Heart left ventricle (tissue), 16 donors: ENCODE measurements at regions of chr6 and their contacts with region 1.

Region 1: GRCh38 chr6:128520436-128521281 is at the start of gene PTPRK:
- DNase-seq: peak; percentile 94 to 96 (median 95)
- ATAC-seq: peak; percentile 87 to 96 (median 94)
- H3K4me3 ChIP-seq: peak within 1 kb of the TSS; percentile 60 to 91 (median 87)
- H3K27ac ChIP-seq: peak within 1 kb of the TSS; percentile 87 to 98 (median 94)
- H3K4me1 ChIP-seq: peaks cover 0 to 33% (median 22%) of the 10 kb centered on the region in 12 donors
- H3K27me3 ChIP-seq: peaks cover 0 to 48% (median 0%) of the 10 kb centered on the region in 9 donors
- CTCF ChIP-seq: peak in 11 of 12 donors; percentile 46 to 92 (median 81)
- POLR2A ChIP-seq: peak; percentile 66 to 98
- total RNA-seq, gene PTPRK: 27.8 to 50.8 (median 40.0) TPM

Region 2: GRCh38 chr6:127855542-127856159 is 665.0 kb before region 1 on chr6:
- intact Hi-C with region 1: loop called in 1 of 10 experiments (anchors 10 kb)
- DNase-seq: no peak
- ATAC-seq: no peak
- H3K4me3 ChIP-seq: no peak overlapping the region
- H3K27ac ChIP-seq: no peak overlapping the region
- H3K4me1 ChIP-seq: no peaks in the 10 kb centered on the region
- H3K27me3 ChIP-seq: no peaks in the 10 kb centered on the region
- CTCF ChIP-seq: peak in 10 of 12 donors; percentile 30 to 60 (median 42)
- POLR2A ChIP-seq: no peak

Region 3: GRCh38 chr6:128240024-128240428 is 280.6 kb before region 1 on chr6:
- intact Hi-C with region 1: loop called in 3 of 10 experiments (anchors 10 kb)
- DNase-seq: no peak
- ATAC-seq: no peak
- H3K4me3 ChIP-seq: no peak overlapping the region
- H3K27ac ChIP-seq: peak overlapping the region in 4 of 12 donors; percentile 1 to 37 (median 12)
- H3K4me1 ChIP-seq: peaks cover 0 to 38% (median 11%) of the 10 kb centered on the region in 12 donors
- H3K27me3 ChIP-seq: no peaks in the 10 kb centered on the region
- CTCF ChIP-seq: no peak
- POLR2A ChIP-seq: no peak

Region 4: DNA sequence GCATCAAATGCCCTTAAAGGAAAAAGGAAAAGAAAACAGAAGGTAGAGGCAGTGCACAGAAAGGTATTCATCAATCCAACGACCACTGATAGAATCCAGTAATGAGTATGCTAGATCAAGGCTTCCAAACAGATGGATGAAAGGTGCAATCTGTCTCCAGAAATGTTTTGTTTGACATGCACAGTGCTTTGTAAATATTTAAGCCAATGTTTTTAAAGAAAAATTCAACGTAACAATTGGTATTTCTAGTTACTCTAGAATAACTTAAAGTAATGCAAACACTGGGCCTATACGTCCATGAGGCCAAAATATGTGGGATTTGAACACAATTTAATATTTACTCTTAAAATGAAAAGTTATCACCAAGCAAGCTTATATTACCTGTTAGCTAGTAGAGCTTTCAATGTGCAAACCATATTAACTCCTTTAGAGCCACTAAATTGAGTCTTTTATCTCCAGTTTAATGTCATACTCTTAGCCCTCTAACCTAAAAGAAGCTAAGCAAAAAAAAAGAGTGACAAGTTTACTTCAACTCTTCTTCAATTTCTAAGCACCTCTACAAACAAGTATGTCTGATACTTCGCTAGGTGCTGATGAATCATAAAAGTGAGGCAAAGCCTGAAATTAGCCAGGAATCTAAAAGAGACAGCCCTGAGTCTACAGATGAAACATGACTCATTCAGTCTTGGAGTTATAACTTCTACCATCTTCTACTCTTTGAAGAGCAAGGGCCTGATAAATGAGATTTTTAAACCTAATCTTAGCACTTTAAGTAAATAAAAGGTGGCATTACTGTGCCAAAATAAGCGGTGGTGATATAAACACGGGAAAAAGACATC is 170.0 kb before region 1 on chr6:
- intact Hi-C with region 1: loop called in 2 of 10 experiments (anchors 10 kb)
- DNase-seq: no peak
- ATAC-seq: no peak
- H3K4me3 ChIP-seq: no peak overlapping the region
- H3K27ac ChIP-seq: peak overlapping the region in 1 of 12 donors; percentile 27
- H3K4me1 ChIP-seq: peaks cover 0 to 22% (median 8%) of the 10 kb centered on the region in 12 donors
- H3K27me3 ChIP-seq: no peaks in the 10 kb centered on the region
- CTCF ChIP-seq: no peak
- POLR2A ChIP-seq: no peak

Region 5: DNA sequence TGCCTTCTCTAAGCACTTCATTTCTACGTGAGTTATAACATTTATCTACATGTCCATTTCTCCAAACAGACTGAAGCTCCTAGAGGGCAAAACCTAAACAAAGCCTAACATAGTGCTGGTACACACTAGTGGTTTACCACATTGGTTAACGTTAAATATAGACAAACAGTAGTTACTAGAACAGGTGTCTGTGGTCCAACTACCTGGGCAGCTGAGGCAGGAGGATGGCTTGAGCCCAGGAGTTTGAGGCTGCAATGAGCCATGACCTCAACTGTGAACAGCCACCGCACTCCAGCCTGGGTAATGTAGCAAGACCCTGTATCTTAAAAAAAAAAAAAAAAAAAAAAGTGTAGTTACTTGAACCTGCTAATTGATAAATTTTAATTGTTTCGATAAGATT is 26.8 kb before region 1 on chr6:
- intact Hi-C with region 1: loop called in 1 of 10 experiments (anchors 2 kb)
- DNase-seq: no peak
- ATAC-seq: no peak
- H3K4me3 ChIP-seq: no peak overlapping the region
- H3K27ac ChIP-seq: no peak overlapping the region
- H3K4me1 ChIP-seq: peaks cover 8 to 50% (median 24%) of the 10 kb centered on the region in 12 donors
- H3K27me3 ChIP-seq: no peaks in the 10 kb centered on the region
- CTCF ChIP-seq: no peak
- POLR2A ChIP-seq: no peak

Region 6: DNA sequence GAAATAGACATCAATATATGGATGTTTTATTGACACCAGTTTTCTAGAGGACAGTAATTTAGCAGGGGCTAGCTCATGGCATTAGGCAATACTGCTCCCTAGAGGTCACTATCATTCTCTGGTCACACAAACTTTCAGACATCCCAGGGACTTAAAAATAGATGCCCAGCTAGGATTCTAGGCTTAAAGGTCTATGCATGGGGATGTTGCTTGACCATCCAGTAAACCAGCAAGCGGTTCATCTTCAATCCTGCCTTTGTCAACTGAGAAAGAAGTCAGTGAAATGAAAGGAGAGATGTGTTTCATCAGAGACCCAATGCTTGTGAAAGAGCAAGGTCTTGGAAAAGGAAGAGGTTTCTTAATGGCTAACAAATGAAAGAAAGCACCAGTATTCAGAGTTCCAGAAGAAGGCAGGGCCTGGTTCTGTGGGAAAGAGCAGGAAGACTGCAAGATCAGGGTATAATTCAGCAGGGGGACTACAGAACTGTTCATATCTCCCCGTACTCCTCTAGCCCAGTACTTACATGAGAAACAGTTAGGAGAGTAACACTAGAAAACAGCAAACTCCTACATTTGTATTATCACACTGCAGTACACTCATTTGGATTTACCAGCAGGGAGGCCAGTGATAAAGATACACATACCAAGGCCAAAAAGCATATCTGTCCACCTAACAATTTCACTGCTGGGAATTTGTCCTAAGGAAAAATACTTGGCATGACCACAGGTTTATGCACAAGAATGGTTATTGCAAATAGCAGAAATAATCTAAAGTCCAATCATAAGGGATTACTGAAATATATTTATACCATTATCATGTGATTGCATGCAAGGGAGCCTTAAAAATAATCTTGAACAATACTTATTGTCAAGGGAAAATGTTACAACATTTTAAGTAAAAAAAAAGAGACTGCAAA is 210.8 kb after region 1 on chr6:
- intact Hi-C with region 1: loop called in 6 of 10 experiments (anchors 2 to 10 kb)
- DNase-seq: peak in 1 of 5 donors; percentile 19
- ATAC-seq: peak; percentile 67 to 85 (median 80)
- H3K4me3 ChIP-seq: no peak overlapping the region
- H3K27ac ChIP-seq: peak overlapping the region in 4 of 12 donors; percentile 6 to 49 (median 22)
- H3K4me1 ChIP-seq: peaks cover 0 to 10% (median 0%) of the 10 kb centered on the region in 12 donors
- H3K27me3 ChIP-seq: no peaks in the 10 kb centered on the region
- CTCF ChIP-seq: peak; percentile 44 to 75 (median 60)
- POLR2A ChIP-seq: no peak